Calu3 (cell line): ENCODE measurements at regions of chr5 and their contacts with region 1.

Region 1: DNA sequence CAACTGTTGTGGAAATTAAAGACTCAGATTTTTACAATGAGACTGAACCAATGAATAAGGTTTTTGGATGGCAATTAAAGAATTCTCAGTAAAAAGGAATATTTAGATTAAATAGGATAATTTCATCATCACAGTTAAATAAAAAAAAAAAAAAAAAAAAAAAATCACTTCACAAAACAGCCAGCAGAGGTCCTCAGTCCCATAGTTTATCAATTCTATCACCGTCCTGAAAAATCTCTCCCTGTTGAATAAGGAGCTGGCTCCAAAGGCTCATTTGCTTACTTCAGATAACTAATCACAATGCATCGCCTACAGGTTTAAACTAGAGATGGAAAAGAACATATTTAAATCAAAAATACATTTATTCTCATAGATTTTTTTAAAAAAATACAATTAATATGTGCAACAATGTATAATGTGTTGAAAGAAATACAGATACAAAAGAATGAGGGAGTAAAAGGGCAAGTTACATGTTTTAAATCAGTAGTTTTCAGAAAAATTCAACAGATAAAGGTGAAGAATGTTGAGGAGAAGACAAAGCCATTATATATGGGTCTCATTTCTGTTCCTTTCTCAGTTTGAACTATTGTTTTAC is 175.8 kb upstream of the CHD1 start:
- DNase-seq: peak; percentile 17
- H3K4me3 Mint-ChIP-seq: no peak overlapping the region
- H3K27ac Mint-ChIP-seq: no peak overlapping the region
- H3K4me1 Mint-ChIP-seq: no peaks in the 10 kb centered on the region
- H3K27me3 Mint-ChIP-seq: no peaks in the 10 kb centered on the region
- CTCF ChIP-seq: peak; percentile 68

Region 2: DNA sequence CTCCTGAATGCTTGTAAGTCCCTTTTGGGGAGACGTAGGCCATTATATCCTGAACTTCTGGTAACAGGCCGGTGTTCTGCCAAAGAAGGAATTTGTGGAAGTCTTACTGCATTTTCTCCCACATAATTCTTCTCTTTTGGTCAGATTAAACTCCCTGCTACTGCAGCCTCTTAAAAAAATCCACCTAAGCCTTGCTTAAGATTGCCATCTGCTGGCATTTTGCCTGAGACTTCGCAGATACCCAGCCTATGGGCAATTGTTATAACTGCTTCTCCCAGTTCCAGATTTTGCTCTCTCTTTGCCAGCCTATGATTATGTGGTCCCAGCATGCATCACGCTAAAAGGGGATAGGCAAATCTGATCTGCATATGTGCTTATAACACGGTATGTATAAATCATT is 215.8 kb after region 1 on chr5:
- CTCF ChIA-PET with region 1: no interaction called
- intact Hi-C with region 1: loop called (anchors 1 kb)
- DNase-seq: peak; percentile 46
- H3K4me3 Mint-ChIP-seq: no peak overlapping the region
- H3K27ac Mint-ChIP-seq: no peak overlapping the region
- H3K4me1 Mint-ChIP-seq: no peaks in the 10 kb centered on the region
- H3K27me3 Mint-ChIP-seq: no peaks in the 10 kb centered on the region
- CTCF ChIP-seq: no peak

Region 3: GRCh38 chr5:99621772-99622681 is 517.4 kb after region 1 on chr5:
- CTCF ChIA-PET with region 1: no interaction called
- intact Hi-C with region 1: no loop called
- DNase-seq: no peak
- H3K4me3 Mint-ChIP-seq: no peak overlapping the region
- H3K27ac Mint-ChIP-seq: no peak overlapping the region
- H3K4me1 Mint-ChIP-seq: no peaks in the 10 kb centered on the region
- H3K27me3 Mint-ChIP-seq: no peaks in the 10 kb centered on the region
- CTCF ChIP-seq: no peak

Region 4: GRCh38 chr5:100311807-100312206 is 1207.2 kb after region 1 on chr5:
- CTCF ChIA-PET with region 1: interaction called, 18 read pairs
- intact Hi-C with region 1: loop called (anchors 1 kb)
- DNase-seq: no peak
- H3K4me3 Mint-ChIP-seq: no peak overlapping the region
- H3K27ac Mint-ChIP-seq: no peak overlapping the region
- H3K4me1 Mint-ChIP-seq: no peaks in the 10 kb centered on the region
- H3K27me3 Mint-ChIP-seq: no peaks in the 10 kb centered on the region
- CTCF ChIP-seq: peak; percentile 16